CD4-positive, alpha-beta memory T cell (primary cell): ENCODE measurements at regions of chr5 and their contacts with region 1.

Region 1: DNA sequence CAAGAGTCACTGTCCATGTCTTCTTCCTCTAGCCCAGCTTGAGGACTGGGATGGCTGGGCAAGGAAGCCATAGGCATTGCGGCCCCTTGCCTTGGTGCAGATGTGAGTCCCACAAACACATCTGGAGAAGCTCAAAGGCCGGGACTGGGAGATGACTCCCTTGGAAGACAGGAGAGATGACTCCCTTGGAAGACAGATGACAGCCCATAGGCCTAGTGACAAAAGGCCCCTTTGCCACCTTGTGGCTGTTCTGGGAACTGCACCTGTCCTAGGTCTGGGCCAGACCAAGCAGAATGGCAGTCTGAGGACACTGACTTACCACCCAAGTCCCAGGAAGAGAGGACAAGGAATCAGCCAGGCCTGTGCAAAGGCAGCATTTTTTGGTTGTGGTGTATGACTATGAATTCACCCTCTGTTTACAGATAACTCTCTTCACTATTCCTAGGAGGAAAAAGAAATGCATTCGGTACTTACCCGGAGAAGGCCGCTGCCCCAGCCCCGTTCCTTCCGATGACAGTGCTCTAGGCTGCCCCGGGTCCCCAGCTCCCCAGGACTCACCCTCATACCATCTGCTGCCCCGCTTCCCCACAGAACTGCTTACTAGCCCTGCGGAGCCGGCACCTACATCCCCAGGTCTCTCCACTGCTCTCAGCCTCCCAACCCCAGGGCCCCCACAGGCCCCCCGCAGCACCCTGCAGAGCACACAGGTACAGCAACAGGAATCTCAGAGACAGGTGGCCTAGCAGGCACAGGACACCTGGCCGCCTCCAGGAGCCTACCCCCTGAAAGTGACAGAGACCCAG is 30.8 kb downstream of the SKP1 start:
- DNase-seq: peak; percentile 74 to 83 (median 77)
- H3K4me3 ChIP-seq: no peak overlapping the region
- H3K4me3 Mint-ChIP-seq: peak overlapping the region in 2 of 8 donors; percentile 26 to 30
- H3K27ac ChIP-seq: no peak overlapping the region
- H3K27ac Mint-ChIP-seq: peak overlapping the region; percentile 11 to 98 (median 89)
- H3K4me1 ChIP-seq: peaks cover 24% of the 10 kb centered on the region
- H3K4me1 Mint-ChIP-seq: peaks cover 26 to 70% (median 44%) of the 10 kb centered on the region in 4 donors
- H3K27me3 ChIP-seq: no peaks in the 10 kb centered on the region
- H3K27me3 Mint-ChIP-seq: no peaks in the 10 kb centered on the region

Region 2: DNA sequence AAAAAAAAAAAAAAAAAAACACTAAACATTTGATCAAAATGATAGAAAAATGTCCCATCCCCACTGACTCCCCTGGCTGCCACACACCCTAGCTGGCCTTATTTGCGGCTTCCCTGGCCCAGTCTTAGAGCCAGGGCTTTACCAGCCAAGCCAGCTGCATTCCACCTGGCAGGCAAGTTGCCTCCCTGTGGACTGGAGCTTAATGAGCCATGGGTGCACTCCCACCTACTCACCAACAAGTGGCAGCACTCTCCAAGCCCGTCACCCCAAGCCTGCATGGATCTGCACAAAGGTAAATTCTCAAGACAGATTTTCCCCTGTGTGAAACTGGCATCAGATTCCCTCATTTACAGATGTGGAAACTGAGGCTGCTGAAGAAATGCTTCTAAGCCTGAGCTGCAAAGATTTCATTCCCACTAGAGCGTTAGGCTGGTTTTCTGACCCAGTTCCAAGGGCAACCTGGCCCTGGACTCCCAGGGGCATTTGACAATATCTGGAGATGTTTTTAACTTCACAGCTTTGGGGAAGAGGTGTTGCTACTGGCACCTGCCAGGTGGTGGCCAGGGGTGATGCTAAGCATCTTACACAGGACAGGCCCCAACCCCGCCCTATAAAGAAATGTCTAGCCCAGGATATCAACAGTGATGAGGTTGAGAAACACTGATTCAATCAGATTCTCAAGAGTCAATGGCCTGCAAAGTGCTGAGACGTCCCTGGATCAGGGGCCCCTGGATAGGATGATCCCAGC is 119.3 kb before region 1 on chr5:
- CTCF ChIA-PET with region 1: interaction called, 603 read pairs
- POLR2A ChIA-PET with region 1: interaction called, 11 read pairs
- intact Hi-C with region 1: no loop called
- DNase-seq: peak; percentile 41 to 64 (median 48)
- H3K4me3 ChIP-seq: no peak overlapping the region
- H3K4me3 Mint-ChIP-seq: no peak overlapping the region
- H3K27ac ChIP-seq: no peak overlapping the region
- H3K27ac Mint-ChIP-seq: peak overlapping the region in 1 of 7 donors; percentile 70
- H3K4me1 ChIP-seq: no peaks in the 10 kb centered on the region
- H3K4me1 Mint-ChIP-seq: peaks cover 0 to 2% (median 0%) of the 10 kb centered on the region in 4 donors
- H3K27me3 ChIP-seq: no peaks in the 10 kb centered on the region
- H3K27me3 Mint-ChIP-seq: peaks cover 0 to 9% of the 10 kb centered on the region in 2 donors

Region 3: GRCh38 chr5:134132372-134133034 is 13.5 kb before region 1 on chr5:
- CTCF ChIA-PET with region 1: interaction called, 9 read pairs
- POLR2A ChIA-PET with region 1: no interaction called
- intact Hi-C with region 1: loop called (anchors 1 kb)
- DNase-seq: peak; percentile 86 to 97 (median 88)
- H3K4me3 ChIP-seq: peak overlapping the region; percentile 43 to 68
- H3K4me3 Mint-ChIP-seq: peak overlapping the region; percentile 86 to 99 (median 96)
- H3K27ac ChIP-seq: peak overlapping the region; percentile 97
- H3K27ac Mint-ChIP-seq: peak overlapping the region; percentile 95 to 99 (median 98)
- H3K4me1 ChIP-seq: peaks cover 100% of the 10 kb centered on the region
- H3K4me1 Mint-ChIP-seq: peaks cover 65 to 100% (median 85%) of the 10 kb centered on the region in 4 donors
- H3K27me3 ChIP-seq: no peaks in the 10 kb centered on the region
- H3K27me3 Mint-ChIP-seq: no peaks in the 10 kb centered on the region

Region 4: GRCh38 chr5:134161513-134162395 is 15.8 kb after region 1 on chr5:
- CTCF ChIA-PET with region 1: interaction called, 5 read pairs
- POLR2A ChIA-PET with region 1: interaction called, 34 read pairs
- intact Hi-C with region 1: no loop called
- DNase-seq: no peak
- H3K4me3 ChIP-seq: no peak overlapping the region
- H3K4me3 Mint-ChIP-seq: no peak overlapping the region
- H3K27ac ChIP-seq: no peak overlapping the region
- H3K27ac Mint-ChIP-seq: peak overlapping the region in 5 of 7 donors; percentile 9 to 55 (median 22)
- H3K4me1 ChIP-seq: peaks cover 3% of the 10 kb centered on the region
- H3K4me1 Mint-ChIP-seq: peaks cover 21 to 44% (median 32%) of the 10 kb centered on the region in 4 donors
- H3K27me3 ChIP-seq: no peaks in the 10 kb centered on the region
- H3K27me3 Mint-ChIP-seq: no peaks in the 10 kb centered on the region

Region 5: DNA sequence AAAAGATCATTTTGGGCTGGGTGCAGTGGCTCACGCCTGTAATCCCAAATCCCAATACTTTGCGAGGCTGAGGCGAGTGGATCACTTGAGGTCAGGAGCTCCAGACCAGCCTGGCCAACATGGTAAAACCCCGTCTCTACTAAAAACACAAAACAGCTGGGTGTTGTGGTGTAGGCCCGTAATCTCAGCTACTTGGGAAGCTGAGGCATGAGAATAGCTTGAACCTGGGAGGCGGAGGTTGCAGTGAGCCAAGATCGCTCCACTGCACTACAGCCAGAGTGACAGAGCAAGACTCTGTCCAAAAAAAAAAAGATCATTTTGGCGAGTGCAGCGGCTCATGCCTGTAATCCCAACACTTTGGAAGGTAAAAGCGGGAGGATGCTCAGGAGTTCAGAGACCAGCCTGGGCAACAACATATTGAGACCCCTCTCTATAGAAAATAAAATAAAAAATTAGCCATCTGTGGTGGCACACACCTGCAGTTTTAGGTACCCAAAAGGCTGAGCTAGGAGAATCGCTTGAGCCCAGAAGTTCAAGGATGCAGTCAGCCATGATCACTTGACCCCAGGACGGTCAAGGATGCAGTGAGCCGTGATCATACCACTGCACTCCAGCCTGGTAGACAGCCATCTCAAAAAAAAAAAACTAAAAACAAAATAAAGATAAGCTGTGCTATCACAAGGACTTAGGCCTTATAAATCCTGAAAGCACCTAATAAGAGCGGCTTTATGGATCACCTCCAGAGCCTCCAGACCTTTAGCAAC is 63.7 kb after region 1 on chr5:
- CTCF ChIA-PET with region 1: no interaction called
- POLR2A ChIA-PET with region 1: no interaction called
- intact Hi-C with region 1: no loop called
- DNase-seq: no peak
- H3K4me3 ChIP-seq: no peak overlapping the region
- H3K4me3 Mint-ChIP-seq: peak overlapping the region in 6 of 8 donors; percentile 5 to 43 (median 36)
- H3K27ac ChIP-seq: no peak overlapping the region
- H3K27ac Mint-ChIP-seq: peak overlapping the region in 4 of 7 donors; percentile 7 to 59 (median 38)
- H3K4me1 ChIP-seq: peaks cover 74% of the 10 kb centered on the region
- H3K4me1 Mint-ChIP-seq: peaks cover 42 to 76% (median 61%) of the 10 kb centered on the region in 4 donors
- H3K27me3 ChIP-seq: no peaks in the 10 kb centered on the region
- H3K27me3 Mint-ChIP-seq: no peaks in the 10 kb centered on the region